GM12878 (cell line): ENCODE measurements at regions of chr9 and their contacts with region 1.

Region 1: DNA sequence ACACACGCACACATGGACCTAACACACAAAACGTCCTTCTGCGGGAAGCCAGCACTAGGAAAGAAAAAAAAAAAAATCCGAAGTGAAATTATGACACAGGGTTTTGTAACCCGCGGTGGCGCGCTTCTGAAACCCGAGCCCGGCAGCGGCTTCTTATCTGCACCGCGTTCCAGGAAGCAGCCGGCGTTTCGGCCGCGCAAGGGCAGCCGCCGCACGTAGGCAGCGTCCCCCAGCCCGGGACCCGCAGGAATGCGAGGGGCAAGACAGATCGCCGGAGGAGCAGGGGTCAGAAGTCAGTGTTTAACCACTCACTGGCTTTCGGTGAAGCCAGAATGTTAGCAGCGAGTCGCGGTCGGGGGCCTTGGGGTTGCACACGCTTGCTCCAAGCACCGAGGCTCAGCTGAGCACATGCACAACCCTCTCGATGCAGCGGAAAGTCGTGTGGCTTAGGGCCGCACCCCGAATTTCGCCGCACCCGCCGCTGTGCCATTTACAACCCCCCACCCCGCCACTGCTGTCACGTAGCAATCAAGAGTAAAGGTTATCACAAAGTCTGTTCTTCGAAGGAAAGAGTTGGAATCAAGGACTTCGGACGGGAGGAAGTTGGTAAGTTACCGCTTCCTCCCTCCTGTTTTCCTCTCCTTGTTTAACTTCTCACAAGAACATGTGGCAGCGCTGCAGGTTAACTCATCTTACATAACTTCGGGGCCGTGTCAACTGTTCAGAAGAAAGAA is 167.9 kb downstream of the AUH start:
- DNase-seq: no peak
- ATAC-seq: peak; percentile 85
- H3K4me3 ChIP-seq: peak overlapping the region; percentile 65
- H3K27ac ChIP-seq: no peak overlapping the region
- H3K4me1 ChIP-seq: peaks cover 23% of the 10 kb centered on the region
- H3K27me3 ChIP-seq: peaks cover 0 to 3% of the 10 kb centered on the region in 2 experiments; a peak in 2 of 4 replicates
- CTCF ChIP-seq: no peak
- EP300 ChIP-seq: no peak; a peak in 1 of 4 replicates
- POLR2A ChIP-seq: peak; percentile 61; the same call in 1 of the 2 replicates
- RAD21 ChIP-seq: no peak

Region 2: GRCh38 chr9:90921111-90921510 is 272.7 kb before region 1 on chr9:
- CTCF ChIA-PET with region 1: no interaction called
- POLR2A ChIA-PET with region 1: no interaction called
- RAD21 ChIA-PET with region 1: no interaction called
- SMC1A ChIA-PET with region 1: no interaction called
- in situ Hi-C with region 1: no loop called
- intact Hi-C with region 1: loop called (anchors 5 kb)
- DNase-seq: no peak
- ATAC-seq: no peak
- H3K4me3 ChIP-seq: no peak overlapping the region
- H3K27ac ChIP-seq: no peak overlapping the region
- H3K4me1 ChIP-seq: peaks cover 17% of the 10 kb centered on the region
- H3K27me3 ChIP-seq: no peaks in the 10 kb centered on the region; a peak in 2 of 4 replicates
- CTCF ChIP-seq: no peak
- EP300 ChIP-seq: no peak
- POLR2A ChIP-seq: no peak
- RAD21 ChIP-seq: no peak

Region 3: DNA sequence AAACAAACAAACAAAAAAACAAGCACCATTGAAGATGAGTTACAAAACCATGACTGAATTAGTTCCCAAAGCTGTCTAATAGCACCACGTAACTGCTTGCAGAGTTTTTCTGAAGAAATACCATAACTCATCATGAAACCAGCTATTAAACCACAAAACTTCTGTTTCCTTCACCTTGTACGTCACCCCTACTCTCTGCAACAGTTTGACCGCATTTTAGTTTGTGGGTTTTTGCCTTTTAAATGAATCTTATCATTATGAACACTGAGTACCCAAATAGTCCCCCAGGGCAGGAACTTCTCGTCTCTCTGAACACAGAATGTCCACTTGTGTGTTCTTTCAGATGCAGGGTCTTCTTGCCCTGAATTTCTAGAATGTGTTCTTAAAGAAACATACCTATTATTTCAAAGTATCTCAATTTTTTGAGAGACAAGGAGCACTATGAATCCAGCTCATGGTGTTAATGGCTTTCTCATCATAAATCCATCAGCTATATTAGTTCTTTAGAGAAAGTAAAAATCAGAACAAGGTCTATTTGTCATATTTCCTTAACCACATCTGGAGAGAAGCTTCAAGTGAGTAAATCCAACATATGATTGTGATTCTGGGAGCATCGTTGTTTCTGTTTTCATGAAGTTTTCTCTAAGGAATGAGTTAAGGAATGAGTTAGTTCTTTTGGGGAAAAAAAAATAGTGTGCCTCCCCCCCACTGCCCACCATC is 42.7 kb before region 1 on chr9:
- CTCF ChIA-PET with region 1: no interaction called
- POLR2A ChIA-PET with region 1: no interaction called
- RAD21 ChIA-PET with region 1: interaction called, 5 read pairs
- SMC1A ChIA-PET with region 1: interaction called, 7 read pairs
- in situ Hi-C with region 1: no loop called
- intact Hi-C with region 1: loop called (anchors 5 kb)
- DNase-seq: peak; percentile 72
- ATAC-seq: peak; percentile 75
- H3K4me3 ChIP-seq: 0 out of 2 replicates have a peak overlapping the region, but pooled peaks have one; percentile 3
- H3K27ac ChIP-seq: peak overlapping the region; percentile 35; the same call in 1 of the 2 replicates
- H3K4me1 ChIP-seq: peaks cover 37% of the 10 kb centered on the region
- H3K27me3 ChIP-seq: peaks cover 0 to 7% of the 10 kb centered on the region in 2 experiments; a peak in 1 of 4 replicates
- CTCF ChIP-seq: no peak
- EP300 ChIP-seq: peak; percentile 94 to 95; a peak in 2 of 4 replicates
- POLR2A ChIP-seq: no peak
- RAD21 ChIP-seq: no peak

Region 4: DNA sequence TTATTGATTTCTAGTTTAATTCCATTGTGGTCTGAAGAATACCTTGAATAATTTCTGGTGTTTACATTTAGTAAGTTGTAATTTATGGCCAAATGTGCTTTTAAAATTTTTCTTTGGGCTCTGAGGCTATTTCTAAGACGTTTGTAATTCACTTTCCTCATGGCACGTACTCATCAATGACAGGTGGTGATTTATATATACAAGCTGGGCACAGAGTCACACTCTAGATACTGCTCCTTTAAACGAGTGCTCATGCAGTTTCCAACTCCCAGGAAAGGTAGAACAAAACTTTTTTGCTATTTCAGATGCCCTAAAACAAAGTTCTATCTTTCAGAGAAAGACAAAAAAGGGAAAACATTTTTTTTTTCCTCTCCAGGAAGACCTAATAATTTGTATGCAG is 21.0 kb after region 1 on chr9:
- CTCF ChIA-PET with region 1: no interaction called
- POLR2A ChIA-PET with region 1: no interaction called
- RAD21 ChIA-PET with region 1: no interaction called
- SMC1A ChIA-PET with region 1: no interaction called
- in situ Hi-C with region 1: no loop called
- intact Hi-C with region 1: no loop called
- DNase-seq: no peak
- ATAC-seq: no peak
- H3K4me3 ChIP-seq: no peak overlapping the region
- H3K27ac ChIP-seq: no peak overlapping the region
- H3K4me1 ChIP-seq: peaks cover 3% of the 10 kb centered on the region; the same call in 1 of the 2 replicates
- H3K27me3 ChIP-seq: no peaks in the 10 kb centered on the region
- CTCF ChIP-seq: no peak
- EP300 ChIP-seq: no peak
- POLR2A ChIP-seq: no peak
- RAD21 ChIP-seq: no peak

Region 5: DNA sequence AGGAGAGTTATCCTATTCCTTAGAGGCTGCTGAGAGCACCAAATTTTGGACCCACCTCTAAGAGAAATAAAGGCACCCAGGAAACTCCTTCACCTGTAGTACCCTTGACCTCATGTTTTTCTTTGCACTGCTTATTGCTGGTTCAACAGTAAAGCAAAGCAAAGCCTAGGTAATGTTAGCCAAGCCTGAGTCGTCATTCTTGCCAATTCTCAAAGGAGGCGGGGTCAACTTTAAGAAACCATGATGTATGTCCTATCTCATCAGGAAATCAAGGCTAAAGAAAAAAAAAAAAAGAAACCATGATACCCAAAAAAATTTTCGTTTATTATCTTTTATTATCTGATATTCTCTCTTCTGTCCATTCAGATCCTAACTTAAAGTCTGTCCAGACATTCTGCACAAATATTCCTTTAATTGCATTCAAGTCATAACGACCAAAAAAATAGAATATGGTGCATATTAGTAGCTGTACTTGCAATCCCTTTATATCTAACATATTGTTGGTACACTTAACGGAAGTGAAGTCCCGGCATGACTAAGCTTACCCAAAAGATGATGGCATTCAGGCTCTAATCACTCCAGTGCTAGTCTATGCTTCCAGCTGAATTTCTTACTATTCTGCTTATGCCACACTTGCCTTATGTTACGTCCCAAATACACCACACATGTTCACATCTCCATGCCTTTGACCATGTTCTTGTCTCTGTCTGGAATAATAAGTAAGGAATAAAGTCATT is 166.1 kb after region 1 on chr9:
- CTCF ChIA-PET with region 1: no interaction called
- POLR2A ChIA-PET with region 1: no interaction called
- RAD21 ChIA-PET with region 1: no interaction called
- SMC1A ChIA-PET with region 1: no interaction called
- in situ Hi-C with region 1: no loop called
- intact Hi-C with region 1: loop called (anchors 10 kb)
- DNase-seq: no peak
- ATAC-seq: no peak
- H3K4me3 ChIP-seq: peak overlapping the region; percentile 69; the same call in 1 of the 2 replicates
- H3K27ac ChIP-seq: no peak overlapping the region
- H3K4me1 ChIP-seq: peaks cover 26% of the 10 kb centered on the region
- H3K27me3 ChIP-seq: 0 out of 4 replicates have a peak, but pooled peaks cover 0 to 2% of the 10 kb centered on the region in 2 experiments
- CTCF ChIP-seq: no peak
- EP300 ChIP-seq: no peak
- POLR2A ChIP-seq: no peak
- RAD21 ChIP-seq: no peak